Activated CD4-positive, alpha-beta memory T cell treated with anti-CD3 and anti-CD28 coated beads for 36 hours (primary cell): ENCODE measurements at regions of chr10 and their contacts with region 1.

Region 1: DNA sequence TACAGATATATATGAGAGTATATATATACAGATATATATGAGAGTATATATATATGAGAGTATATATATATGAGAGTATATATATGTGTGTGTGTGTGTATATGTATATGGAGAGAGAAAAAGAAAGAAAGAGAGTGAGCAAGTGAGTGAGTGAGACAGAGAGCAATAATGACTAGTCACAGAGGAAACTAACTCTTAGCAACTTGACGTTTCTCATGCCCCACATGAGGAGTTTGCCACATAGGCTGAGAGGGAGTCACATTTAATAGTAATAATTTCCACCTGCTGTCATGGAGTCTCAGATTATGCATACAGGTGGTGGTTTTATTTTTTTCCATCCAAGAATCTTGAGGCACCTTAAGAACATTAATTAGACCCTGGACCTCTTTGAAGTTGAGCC is 199.9 kb downstream of the GATA3 start:
- DNase-seq: peak; percentile 54
- H3K4me3 Mint-ChIP-seq: peak overlapping the region; percentile 53
- H3K27ac Mint-ChIP-seq: peak overlapping the region; percentile 68
- H3K4me1 Mint-ChIP-seq: peaks cover 23% of the 10 kb centered on the region
- H3K27me3 Mint-ChIP-seq: no peaks in the 10 kb centered on the region

Region 2: DNA sequence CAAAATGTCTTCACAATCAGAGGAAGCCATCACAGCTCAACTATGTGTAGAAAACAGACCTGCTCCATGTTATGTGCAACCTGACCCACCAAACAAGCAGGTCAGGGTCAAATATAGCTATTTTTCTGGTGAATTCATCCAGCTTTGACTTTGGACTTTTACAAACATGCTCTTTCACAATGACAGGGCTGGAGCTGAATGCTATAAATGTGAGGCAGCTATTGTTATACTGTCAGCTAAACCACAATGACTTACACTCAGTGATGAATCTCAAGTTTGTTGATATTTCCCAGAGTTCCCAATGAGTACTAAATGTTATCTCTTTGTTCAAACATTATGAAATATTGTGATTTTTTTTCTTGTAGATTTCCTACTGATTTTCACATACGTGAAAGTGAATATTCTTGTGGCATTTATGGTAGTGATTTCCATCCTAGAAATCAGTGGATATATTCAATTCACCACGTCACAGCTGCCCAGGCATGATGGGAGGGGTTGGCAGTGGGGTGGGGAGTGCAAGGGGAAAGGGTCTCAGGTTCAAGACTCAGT is 553.7 kb before region 1 on chr10:
- CTCF ChIA-PET with region 1: no interaction called
- POLR2A ChIA-PET with region 1: no interaction called
- intact Hi-C with region 1: no loop called
- DNase-seq: no peak
- H3K4me3 Mint-ChIP-seq: no peak overlapping the region
- H3K27ac Mint-ChIP-seq: no peak overlapping the region
- H3K4me1 Mint-ChIP-seq: no peaks in the 10 kb centered on the region
- H3K27me3 Mint-ChIP-seq: peaks cover 31% of the 10 kb centered on the region

Region 3: DNA sequence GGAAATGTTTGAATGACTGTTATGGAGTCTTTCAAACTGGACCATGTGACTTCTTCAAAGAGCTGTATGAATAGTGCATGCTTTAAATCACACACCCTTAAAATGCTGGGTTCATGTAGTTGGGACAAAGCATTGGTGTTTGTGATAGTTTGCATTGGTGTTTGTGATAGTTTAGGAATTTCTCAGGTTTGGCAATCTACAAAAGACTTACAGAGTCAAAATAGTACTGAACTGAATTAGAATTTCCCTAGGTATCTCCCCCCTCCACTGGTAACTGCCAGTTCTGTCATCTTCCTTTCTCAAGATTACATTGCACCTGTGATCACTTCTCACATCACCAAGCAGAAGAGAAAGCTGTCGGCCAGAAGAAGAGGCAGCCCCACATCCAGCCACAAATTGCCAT is 61.3 kb after region 1 on chr10:
- CTCF ChIA-PET with region 1: no interaction called
- POLR2A ChIA-PET with region 1: no interaction called
- intact Hi-C with region 1: loop called (anchors 2 kb)
- DNase-seq: peak; percentile 51
- H3K4me3 Mint-ChIP-seq: no peak overlapping the region
- H3K27ac Mint-ChIP-seq: peak overlapping the region; percentile 85
- H3K4me1 Mint-ChIP-seq: peaks cover 41% of the 10 kb centered on the region
- H3K27me3 Mint-ChIP-seq: peaks cover 4% of the 10 kb centered on the region

Region 4: DNA sequence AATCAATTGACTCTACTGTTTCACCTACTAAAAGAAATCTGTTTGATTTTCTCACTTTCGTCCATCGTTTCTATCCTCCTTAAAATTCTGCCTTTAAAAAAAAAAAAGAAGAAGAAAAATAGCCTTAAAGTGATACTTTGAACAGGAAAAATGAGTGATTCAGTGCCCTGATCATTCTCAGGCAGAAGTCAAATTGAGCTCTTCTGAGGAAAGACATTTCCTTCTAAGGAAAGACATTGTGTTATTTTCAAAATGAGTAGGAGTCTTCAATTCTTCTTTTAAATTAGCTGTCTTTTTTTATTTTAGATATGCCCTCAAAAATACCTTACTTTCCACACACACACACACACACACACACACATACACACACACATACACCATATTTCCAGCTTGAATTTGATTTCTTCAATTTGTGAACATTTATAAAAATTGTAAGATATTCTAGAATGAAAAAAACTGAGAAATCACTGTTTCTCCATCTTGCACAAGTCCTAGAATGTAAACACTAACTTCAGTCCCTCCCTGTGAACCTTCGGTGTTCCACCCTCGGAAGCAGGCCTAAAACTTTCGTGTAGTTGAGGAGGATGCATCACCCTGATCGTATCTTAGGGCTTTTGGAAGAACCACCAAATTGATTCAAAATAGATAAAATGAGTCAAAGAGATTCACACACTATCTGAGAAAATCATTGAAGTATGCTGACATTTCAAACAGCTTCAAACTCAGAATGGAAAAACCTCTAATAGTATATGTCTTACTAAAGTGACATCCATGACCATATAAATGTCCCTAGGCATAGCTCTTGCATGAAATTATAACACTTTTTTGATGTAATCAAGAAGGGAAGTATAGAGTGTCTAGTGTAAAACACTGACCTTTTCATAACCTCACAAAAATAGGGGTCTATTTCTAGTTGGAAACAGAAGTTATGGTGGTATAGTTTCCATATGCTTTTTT is 71.0 kb after region 1 on chr10:
- CTCF ChIA-PET with region 1: no interaction called
- POLR2A ChIA-PET with region 1: no interaction called
- intact Hi-C with region 1: loop called (anchors 5 kb)
- DNase-seq: peak; percentile 53
- H3K4me3 Mint-ChIP-seq: peak overlapping the region; percentile 20
- H3K27ac Mint-ChIP-seq: peak overlapping the region; percentile 89
- H3K4me1 Mint-ChIP-seq: peaks cover 52% of the 10 kb centered on the region
- H3K27me3 Mint-ChIP-seq: peaks cover 3% of the 10 kb centered on the region